Left cardiac atrium (tissue), 4 donors: ENCODE measurements at regions of chr17 and their contacts with region 1.

Region 1: DNA sequence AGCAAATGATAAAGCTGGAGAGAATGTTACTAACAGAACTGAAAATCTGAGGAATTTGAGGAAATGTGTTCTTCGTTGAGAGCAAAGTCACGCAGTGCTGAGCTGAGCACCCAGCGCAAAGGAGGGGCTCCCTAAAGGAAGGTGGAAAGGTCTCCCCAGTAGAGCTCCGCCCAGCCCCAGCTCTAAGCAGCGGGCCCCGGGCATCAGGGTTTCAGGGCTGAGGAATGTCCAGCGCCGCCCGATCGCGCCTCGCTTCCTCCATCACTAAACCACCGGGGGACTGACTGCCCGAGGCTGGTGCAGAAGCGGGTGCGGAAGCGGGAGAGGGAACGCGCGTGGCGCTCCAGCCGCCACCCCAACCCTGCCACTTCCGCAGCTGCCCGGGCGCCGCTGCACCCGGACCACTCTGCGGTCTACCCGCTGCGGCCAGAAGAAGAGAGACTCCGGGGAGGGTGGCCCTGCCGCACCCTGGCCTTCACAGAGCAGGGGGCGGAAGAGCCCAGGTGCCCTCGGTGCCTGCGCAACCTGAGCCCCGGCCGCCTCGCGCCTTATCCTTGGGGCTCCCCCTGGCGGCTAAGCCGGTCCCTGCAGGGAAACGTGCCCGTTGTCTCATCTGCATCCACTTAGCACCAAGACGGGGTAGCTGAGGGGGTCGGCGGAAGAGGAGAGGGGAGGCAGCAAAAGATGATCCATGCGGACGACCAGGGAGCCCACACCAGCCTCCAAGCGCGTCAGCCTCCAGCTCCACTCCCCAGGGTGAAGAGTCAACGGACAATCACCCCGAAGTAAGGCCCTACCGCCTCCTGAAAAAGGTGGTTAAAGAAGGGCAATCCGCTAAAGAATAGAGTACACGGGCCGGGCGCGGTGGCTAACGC is 12.4 kb upstream of the GUCY2D start:
- DNase-seq: peak; percentile 84
- ATAC-seq: peak; percentile 88

Region 2: DNA sequence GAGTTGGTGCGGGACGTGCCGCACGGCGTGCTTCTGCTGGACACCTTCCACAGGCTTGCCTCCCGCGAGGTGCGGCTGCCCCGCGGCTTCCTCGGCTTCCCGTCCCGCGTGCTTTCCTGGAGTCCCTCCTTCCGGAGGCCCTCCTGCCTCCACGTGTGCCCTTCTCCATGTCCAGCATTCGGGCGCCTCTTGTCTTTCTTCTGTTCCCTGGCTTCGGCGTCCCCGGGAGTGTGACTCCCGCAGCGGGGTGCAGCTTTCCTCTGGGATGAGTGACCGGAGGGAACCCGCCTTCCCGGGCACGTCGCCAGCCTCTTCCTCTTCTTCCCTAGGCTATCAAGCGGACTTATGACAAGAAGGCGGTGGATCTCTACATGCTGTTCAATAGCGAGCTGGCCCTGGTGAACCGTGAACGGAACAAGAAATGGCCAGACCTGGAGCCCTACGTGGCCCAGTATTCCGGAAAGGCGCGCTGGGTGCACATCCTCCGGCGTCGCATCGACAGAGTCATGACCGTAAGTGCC is 249.5 kb before region 1 on chr17:
- intact Hi-C with region 1: loop called (anchors 5 to 10 kb)
- DNase-seq: no peak
- ATAC-seq: no peak

Region 3: DNA sequence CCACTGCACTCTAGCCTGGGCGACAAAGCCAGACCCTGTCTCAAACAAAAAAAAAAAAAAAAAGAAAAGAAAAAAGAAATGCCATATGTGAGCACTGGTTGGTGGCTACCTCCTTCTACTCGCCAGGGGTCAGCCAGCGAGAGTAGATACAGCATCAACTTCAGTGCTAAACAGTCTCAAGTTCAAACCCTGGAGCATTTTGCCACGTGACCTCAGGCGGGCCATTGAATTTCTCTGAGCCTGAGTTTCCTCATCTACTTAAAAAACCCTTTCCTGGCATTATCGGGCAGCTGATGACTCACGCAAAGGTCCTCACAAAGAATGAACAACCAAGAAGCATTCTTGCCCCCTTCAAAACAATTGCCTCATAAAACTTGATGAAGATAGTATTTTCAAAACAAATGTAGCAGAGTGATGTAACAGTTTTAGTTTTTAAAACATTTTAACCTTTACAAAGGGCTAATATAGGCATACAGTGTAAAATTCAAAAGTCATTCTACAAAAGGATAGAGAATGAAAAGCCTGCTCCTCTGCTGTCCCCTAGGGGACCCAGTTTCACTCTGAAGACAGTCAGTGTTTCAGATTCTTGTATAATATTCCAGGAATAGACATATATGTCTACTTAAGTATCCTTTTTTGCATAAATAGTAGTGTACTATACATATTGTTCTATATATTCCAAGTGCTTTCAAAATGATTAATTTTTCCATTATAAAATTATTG is 244.1 kb before region 1 on chr17:
- intact Hi-C with region 1: loop called (anchors 5 to 10 kb)
- DNase-seq: peak; percentile 41
- ATAC-seq: peak in 1 of 2 donors; percentile 13

Region 4: DNA sequence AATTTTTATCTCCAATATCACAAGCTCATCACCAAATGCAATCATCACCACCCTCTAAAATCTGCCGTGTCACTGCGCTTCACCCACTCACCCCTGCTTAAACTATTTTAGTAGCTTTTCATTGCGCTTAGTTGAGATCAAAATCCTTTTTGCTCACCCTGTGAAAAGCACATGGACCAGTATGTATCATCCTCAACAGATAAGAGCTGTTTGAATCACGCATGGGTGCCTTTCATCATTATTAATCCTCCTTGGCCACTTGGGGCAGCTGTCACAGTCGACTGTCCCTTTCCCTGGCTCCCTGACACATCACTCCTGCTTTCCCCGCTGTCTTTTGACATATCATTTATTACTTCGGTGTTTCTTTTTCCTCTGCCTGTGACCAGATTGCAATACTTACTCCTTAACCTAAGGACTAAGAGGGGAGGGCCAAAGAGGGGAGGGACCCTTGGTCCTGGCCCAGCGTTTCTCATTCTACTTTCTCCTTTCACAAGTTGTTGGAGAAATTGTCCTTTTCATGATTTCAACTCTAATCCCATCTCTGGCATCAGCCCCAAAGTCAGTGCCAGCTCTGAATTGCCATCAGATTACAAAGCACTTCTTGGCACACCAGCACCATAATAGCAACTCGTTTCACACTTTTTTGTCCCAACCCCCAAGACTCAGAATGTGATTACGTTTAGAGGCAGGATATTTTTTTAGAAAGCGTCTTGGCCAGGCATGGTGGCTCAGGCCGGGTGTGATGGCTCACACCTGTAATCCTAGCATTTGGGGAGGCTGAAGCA is 164.6 kb before region 1 on chr17:
- intact Hi-C with region 1: loop called in 1 of 2 experiments (anchors 10 kb)
- DNase-seq: no peak
- ATAC-seq: peak; percentile 53 to 57

Region 5: GRCh38 chr17:7862692-7863437 is 127.2 kb before region 1 on chr17:
- intact Hi-C with region 1: loop called in 1 of 2 experiments (anchors 2 kb)
- DNase-seq: peak; percentile 42
- ATAC-seq: no peak

Region 6: DNA sequence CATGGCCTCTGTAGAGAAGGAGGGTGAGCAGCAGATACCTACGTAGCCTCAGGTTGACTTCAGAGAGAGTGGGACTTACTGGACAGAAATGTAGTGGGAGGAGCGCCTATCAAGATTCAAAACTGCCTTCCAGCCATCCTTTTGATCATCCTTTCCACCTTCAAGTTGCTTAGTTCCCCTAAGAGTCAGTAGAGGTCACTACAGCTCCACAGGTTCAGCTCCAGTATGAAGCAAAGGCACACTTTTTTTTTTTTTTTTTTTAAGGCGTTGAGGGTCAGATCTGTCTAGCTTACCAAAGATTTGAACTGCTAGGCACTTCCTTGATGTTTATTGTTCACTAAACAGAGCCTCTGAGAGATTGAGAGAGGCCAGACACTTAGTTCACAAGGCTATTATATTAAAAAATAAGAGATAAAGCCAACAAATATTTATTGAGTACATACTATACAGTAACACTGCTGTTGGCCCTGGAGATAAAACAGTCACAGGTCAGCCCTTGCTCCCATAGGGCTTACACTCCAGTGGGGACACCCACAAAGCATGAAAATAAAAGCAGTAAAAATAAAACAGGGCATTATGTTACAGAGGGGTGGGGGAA is 77.0 kb before region 1 on chr17:
- intact Hi-C with region 1: loop called (anchors 2 to 5 kb)
- DNase-seq: no peak
- ATAC-seq: no peak

Region 7: GRCh38 chr17:8057691-8058114 is 67.7 kb after region 1 on chr17:
- intact Hi-C with region 1: loop called in 1 of 2 experiments (anchors 10 kb)
- DNase-seq: no peak
- ATAC-seq: peak; percentile 81 to 85